Sciatic nerve (tissue), 2 donors: ENCODE measurements at regions of chr11 and their contacts with region 1.

Region 1: DNA sequence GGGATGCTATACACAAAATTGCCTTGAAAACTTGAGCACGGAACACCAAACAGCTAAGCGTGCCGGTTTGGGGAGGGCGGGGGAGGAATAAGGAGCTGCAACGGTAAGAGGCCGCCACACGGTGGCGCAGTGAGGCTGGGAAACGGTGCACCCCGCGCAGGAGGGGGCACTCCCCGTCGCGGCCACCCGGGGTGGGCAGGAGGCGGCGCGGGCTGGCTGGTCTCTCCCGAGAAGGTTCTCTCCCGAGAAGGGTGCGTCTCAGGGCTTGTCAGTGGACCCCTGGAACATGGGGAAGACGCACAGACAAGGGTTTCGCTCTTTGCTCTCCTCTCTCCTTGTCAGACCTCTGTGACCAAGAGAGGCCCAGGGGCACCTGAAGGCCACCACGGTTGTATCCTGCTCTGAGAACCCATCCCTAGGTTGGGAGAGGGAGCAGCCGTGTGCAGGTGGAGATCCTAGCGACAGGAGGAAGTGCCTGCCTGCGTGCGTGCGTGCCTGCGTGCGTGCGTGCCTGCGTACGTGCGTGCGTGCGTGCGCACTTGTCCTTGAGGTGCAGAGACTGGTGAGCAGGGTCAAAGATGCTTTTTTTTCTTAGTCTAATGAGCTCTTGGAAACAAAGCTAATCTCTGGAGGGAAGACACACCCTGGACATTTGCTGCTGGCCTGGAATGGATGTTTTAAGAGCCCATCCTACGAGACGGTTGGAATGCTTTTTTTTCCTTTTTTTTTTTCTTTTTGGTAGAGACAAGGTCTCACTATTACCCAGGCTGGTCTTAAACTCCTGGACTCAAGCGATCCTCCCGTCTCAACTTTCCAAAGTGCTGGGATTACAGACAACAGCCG is 18.1 kb upstream of the JAM3 start:
- DNase-seq: peak; percentile 89
- ATAC-seq: peak; percentile 88

Region 2: GRCh38 chr11:133934599-133935550 is 115.9 kb before region 1 on chr11:
- intact Hi-C with region 1: loop called (anchors 5 kb)
- DNase-seq: peak; percentile 70
- ATAC-seq: peak; percentile 74

Region 3: DNA sequence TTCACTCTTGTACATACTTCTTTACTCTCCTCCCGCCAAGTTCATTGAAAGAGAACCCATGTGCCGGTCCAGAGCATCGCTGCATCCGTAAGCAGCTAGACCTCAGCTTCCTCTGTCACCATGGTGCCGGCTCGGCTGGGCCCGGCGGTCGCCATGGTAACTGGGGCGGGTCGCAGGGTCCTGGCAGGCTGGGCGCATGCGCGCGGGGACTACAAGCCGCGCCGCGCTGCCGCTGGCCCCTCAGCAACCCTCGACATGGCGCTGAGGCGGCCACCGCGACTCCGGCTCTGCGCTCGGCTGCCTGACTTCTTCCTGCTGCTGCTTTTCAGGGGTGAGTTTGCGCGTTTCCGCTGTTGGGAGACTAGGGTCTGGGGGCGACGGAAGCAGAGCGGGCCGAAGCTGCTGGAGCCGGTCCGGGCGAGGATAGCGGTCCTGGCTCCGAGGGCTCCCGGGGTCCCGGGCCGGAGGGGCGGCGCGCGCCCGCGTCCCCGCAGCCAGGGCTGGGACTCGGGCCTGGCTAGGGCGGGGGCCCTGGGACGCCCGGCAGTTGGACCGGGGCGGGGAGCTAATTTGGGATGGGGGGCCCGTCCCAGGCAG is 18.2 kb after region 1 on chr11 and contains the start of gene JAM3:
- intact Hi-C with region 1: no loop called
- DNase-seq: peak; percentile 97
- ATAC-seq: peak; percentile 97
- total RNA-seq, gene JAM3: 126 TPM

Region 4: GRCh38 chr11:134139873-134140331 is 89.1 kb after region 1 on chr11:
- intact Hi-C with region 1: loop called (anchors 2 kb)
- DNase-seq: peak; percentile 74
- ATAC-seq: peak; percentile 91